Mucosa of descending colon (tissue), 3 donors: ENCODE measurements at regions of chr20 and their contacts with region 1.

Region 1: DNA sequence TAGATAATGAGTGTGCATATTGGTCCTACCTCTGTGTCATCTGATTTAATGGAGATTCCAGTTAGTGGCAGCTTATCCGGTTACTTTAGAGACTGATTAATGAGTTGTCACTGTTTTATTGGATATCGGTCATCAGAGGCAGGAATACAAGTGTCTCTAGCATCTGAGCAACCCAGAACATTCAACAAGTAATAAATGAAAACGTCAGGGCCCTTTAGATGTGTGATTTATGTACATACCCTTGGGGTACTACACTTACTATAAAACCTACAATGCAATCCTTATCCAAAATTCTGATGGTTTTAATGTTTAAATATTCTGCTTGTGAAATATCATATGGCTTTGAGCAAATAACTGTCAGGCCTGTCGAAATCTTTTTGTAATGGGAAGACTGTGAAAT is 1117.9 kb upstream of the FLRT3 start:
- DNase-seq: no peak
- ATAC-seq: no peak
- H3K4me3 ChIP-seq: no peak overlapping the region
- H3K4me1 ChIP-seq: no peaks in the 10 kb centered on the region
- CTCF ChIP-seq: no peak

Region 2: GRCh38 chr20:15515691-15516090 is 60.4 kb after region 1 on chr20:
- intact Hi-C with region 1: no loop called
- DNase-seq: no peak
- ATAC-seq: no peak
- H3K4me3 ChIP-seq: no peak overlapping the region
- H3K4me1 ChIP-seq: no peaks in the 10 kb centered on the region
- CTCF ChIP-seq: no peak

Region 3: GRCh38 chr20:15528391-15529111 is 73.3 kb after region 1 on chr20:
- intact Hi-C with region 1: no loop called
- DNase-seq: no peak
- ATAC-seq: no peak
- H3K4me3 ChIP-seq: no peak overlapping the region
- H3K4me1 ChIP-seq: no peaks in the 10 kb centered on the region
- CTCF ChIP-seq: no peak

Region 4: DNA sequence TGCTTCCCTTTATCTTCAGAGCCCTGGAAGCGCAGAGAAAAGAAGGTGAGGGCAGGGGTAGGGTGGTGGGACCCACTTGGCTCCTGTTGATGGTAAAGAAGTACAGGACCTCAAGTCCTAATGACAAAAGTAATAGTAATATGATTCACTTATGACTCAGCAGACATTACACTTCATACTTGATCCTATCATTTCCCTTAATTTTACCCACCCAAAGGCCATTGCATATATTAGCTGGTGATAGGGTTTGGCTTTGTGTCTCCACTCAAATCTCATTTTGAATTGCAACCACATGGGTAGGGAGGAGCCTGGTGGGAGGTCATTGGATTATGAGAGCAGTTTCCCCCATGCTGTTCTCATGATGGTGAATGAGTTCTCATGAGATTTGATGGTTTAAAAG is 237.3 kb after region 1 on chr20:
- intact Hi-C with region 1: loop called in 1 of 2 experiments (anchors 5 kb)
- DNase-seq: no peak
- ATAC-seq: no peak
- H3K4me3 ChIP-seq: no peak overlapping the region
- H3K4me1 ChIP-seq: no peaks in the 10 kb centered on the region
- CTCF ChIP-seq: no peak